Body of pancreas (tissue), 4 donors: ENCODE measurements at regions of chr12 and their contacts with region 1.

Region 1: DNA sequence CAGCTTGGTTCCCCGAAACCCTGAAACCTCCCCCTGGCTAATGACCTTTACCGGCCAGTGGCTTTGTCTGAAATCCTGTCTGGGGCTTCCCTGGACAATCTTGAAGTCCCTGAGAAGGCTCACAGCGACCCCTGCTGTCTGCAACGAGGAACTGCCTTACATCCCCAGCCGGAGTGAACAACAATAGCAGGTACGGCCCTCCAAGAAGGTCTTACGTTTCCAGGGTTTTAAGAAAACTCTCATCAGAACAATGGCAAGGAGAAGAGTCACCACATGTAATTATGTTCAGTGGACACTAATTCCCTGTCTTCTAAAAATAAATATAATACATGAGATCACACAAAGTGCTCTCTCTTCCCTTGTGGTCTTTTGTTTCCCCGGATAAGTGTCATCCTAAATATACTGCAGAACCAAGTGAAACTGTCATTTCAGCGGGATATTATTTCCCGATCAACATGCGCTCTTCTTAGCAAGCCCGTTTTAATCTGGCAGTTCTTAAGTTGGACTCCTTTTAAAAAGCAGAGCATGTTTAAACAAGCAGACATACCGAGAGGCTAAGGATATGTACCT is 53.3 kb downstream of the RBM19 start:
- DNase-seq: peak; percentile 64 to 73 (median 70)
- ATAC-seq: no peak
- H3K4me3 ChIP-seq: no peak overlapping the region
- H3K27ac ChIP-seq: no peak overlapping the region
- H3K4me1 ChIP-seq: no peaks in the 10 kb centered on the region
- H3K27me3 ChIP-seq: no peaks in the 10 kb centered on the region
- CTCF ChIP-seq: peak; percentile 62 to 80 (median 76)
- POLR2A ChIP-seq: no peak

Region 2: GRCh38 chr12:113439606-113440030 is 473.2 kb before region 1 on chr12:
- intact Hi-C with region 1: loop called (anchors 10 kb)
- DNase-seq: peak; percentile 60 to 77 (median 62)
- ATAC-seq: peak; percentile 40
- H3K4me3 ChIP-seq: no peak overlapping the region
- H3K27ac ChIP-seq: no peak overlapping the region
- H3K4me1 ChIP-seq: peaks cover 24% of the 10 kb centered on the region
- H3K27me3 ChIP-seq: no peaks in the 10 kb centered on the region
- CTCF ChIP-seq: peak; percentile 42 to 61 (median 52)
- POLR2A ChIP-seq: no peak

Region 3: GRCh38 chr12:113462117-113462774 is 450.6 kb before region 1 on chr12:
- intact Hi-C with region 1: loop called (anchors 10 kb)
- DNase-seq: peak; percentile 79 to 86 (median 82)
- ATAC-seq: peak; percentile 82
- H3K4me3 ChIP-seq: no peak overlapping the region
- H3K27ac ChIP-seq: no peak overlapping the region
- H3K4me1 ChIP-seq: peaks cover 37% of the 10 kb centered on the region
- H3K27me3 ChIP-seq: peaks cover 0 to 41% of the 10 kb centered on the region in 2 donors
- CTCF ChIP-seq: peak; percentile 51 to 78 (median 73)
- POLR2A ChIP-seq: no peak

Region 4: DNA sequence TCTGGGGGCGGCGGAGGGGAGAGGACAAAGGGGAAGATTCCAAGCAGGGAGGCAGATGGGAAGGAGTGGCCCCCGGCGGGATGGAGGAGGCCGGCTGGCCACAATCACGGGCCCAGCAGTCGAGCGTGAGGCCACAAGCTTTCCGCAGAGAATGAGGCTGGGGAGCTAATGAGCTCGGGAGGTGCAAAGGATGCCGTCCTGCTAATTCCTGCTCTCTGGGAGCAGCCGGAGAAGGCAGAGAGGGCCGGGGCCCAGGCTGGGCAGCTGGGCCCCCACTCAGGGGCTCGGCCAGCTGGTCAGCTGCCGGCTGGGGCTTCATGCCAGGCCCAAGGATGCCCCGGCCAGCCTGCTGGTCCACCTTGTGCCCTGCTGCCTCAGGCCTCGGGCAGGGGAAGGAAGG is 343.0 kb before region 1 on chr12:
- intact Hi-C with region 1: no loop called
- DNase-seq: no peak
- ATAC-seq: no peak
- H3K4me3 ChIP-seq: no peak overlapping the region
- H3K27ac ChIP-seq: no peak overlapping the region
- H3K4me1 ChIP-seq: no peaks in the 10 kb centered on the region
- H3K27me3 ChIP-seq: no peaks in the 10 kb centered on the region
- CTCF ChIP-seq: no peak
- POLR2A ChIP-seq: no peak

Region 5: GRCh38 chr12:113862590-113863454 is 50.0 kb before region 1 on chr12:
- intact Hi-C with region 1: no loop called
- DNase-seq: no peak
- ATAC-seq: no peak
- H3K4me3 ChIP-seq: no peak overlapping the region
- H3K27ac ChIP-seq: no peak overlapping the region
- H3K4me1 ChIP-seq: no peaks in the 10 kb centered on the region
- H3K27me3 ChIP-seq: no peaks in the 10 kb centered on the region
- CTCF ChIP-seq: no peak
- POLR2A ChIP-seq: no peak

Region 6: GRCh38 chr12:114096461-114096860 is 183.6 kb after region 1 on chr12:
- intact Hi-C with region 1: no loop called
- DNase-seq: no peak
- ATAC-seq: no peak
- H3K4me3 ChIP-seq: no peak overlapping the region
- H3K27ac ChIP-seq: no peak overlapping the region
- H3K4me1 ChIP-seq: no peaks in the 10 kb centered on the region
- H3K27me3 ChIP-seq: no peaks in the 10 kb centered on the region
- CTCF ChIP-seq: no peak
- POLR2A ChIP-seq: no peak